Activated CD8-positive, alpha-beta memory T cell treated with anti-CD3 and anti-CD28 coated beads, Interleukin-2, amount 10 ng/mL, durations not matched to agents 7 days and 5 days (primary cell): ENCODE measurements at regions of chr9 and their contacts with region 1.

Region 1: DNA sequence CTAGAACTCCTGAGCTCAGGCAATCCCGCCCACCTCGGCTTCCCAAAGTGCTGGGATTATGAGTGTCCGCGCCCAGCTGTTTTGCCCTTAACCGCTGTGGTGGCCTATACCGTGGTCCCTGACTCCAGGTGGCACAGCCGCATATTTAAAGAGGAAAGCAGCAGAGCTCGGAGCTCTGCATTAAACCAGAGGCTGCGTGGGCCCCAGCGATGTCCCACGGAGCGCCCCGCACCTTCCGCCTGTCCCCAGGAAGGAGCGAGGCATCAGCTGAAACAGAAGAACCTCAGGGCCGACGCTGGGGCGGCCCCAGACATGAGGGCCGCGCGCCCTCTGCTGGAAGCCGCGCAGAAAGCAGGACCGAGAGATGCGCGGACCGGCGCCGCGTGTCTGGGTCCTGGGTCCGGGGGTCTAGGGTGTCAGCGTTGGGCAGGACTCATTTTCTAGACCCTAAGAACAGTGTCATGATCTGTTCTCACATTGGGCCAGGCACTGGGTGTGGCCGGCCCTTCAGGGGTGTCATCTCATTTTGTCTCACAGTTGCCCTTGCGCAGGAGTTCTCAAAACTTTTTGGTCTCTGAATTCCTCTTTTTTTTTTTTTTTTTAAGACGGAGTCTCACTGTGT is 37.7 kb downstream of the LAMC3 start:
- DNase-seq: peak; percentile 76
- ATAC-seq: peak; percentile 93
- H3K4me3 Mint-ChIP-seq: no peak overlapping the region
- H3K27ac Mint-ChIP-seq: no peak overlapping the region
- H3K4me1 Mint-ChIP-seq: peaks cover 2% of the 10 kb centered on the region
- H3K27me3 Mint-ChIP-seq: peaks cover 4% of the 10 kb centered on the region

Region 2: DNA sequence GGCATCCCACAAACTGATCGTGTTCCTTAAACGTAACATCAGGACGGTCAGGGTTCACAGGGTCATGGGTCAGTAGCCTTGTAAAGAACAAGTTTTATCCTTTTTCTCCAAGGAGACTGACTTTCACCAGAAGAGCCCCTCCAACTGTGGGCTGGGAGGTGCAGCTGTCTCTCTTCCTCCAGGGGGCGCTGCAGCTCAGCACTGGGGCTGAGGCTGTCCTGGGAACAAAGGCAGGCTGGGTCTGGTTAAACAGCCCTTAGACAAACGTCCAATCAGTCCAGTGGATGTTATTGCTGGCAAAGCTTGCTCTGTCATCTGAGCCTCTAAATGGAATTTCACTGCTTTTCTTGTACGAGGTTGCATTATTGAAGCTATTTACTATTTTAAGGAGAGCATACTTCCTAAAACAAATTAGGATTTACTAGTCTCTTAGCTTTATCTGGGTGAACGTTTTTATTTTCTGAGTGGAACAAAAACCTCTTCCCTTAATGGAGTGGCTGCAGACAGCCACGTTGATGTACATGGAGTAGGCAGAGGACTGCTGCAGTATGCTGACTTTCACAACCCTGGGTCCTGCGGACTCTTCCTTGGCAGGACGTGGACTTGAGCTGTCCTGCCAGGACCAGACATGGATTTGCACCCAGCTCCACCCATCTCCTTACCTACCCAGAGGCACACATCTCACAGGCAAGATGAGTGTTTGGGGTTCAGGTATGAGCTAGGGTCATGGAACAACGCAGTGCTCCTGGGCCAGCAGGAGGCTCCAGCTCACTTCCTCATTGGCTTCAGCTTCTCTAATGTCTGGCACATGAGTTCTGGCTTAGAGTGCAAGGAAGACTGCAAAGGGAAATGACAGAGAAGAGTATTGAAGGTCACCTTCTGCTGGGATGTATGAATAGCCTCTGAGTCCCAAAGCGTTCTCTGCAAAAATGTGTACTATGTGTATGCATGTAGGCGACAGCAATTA is 345.4 kb before region 1 on chr9:
- CTCF ChIA-PET with region 1: interaction called, 13 read pairs
- DNase-seq: peak; percentile 73
- ATAC-seq: peak; percentile 85
- H3K4me3 Mint-ChIP-seq: no peak overlapping the region
- H3K27ac Mint-ChIP-seq: peak overlapping the region; percentile 22
- H3K4me1 Mint-ChIP-seq: peaks cover 27% of the 10 kb centered on the region
- H3K27me3 Mint-ChIP-seq: no peaks in the 10 kb centered on the region

Region 3: GRCh38 chr9:130856474-130856873 is 190.2 kb before region 1 on chr9:
- CTCF ChIA-PET with region 1: no interaction called
- DNase-seq: no peak
- ATAC-seq: no peak
- H3K4me3 Mint-ChIP-seq: no peak overlapping the region
- H3K27ac Mint-ChIP-seq: no peak overlapping the region
- H3K4me1 Mint-ChIP-seq: no peaks in the 10 kb centered on the region
- H3K27me3 Mint-ChIP-seq: no peaks in the 10 kb centered on the region

Region 4: DNA sequence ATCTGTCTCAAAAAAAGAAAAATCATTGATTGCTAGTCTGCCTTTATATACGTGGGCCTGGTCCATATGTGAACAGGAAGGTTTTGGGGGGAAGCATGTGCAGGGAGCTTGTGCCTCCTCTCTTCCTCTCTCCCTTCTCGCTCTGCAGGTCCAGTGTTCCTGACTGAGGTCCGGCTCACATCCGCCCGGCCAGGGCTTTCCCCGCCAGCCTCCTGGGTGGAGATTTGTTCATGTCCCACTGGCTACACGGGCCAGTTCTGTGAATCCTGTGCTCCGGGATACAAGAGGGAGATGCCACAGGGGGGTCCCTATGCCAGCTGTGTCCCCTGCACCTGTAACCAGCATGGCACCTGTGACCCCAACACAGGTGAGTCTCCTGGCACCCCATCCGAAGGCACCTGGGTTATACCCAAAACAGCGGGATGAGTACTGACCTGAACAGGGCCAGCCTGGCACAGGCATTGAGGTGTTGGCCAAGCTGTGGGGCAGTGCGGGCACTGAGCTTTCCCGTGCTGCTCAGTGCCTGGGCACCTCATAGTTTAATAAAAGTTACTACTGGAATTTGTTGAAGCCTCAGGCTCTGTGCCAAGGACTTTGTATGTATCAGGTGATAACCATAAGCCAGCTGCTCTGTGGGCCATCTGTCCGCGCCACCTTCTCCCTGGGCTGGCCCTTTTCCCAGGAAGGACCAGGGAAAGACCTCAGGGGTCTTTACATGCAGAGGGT is 10.3 kb after region 1 on chr9:
- CTCF ChIA-PET with region 1: interaction called, 35 read pairs
- DNase-seq: no peak
- ATAC-seq: no peak
- H3K4me3 Mint-ChIP-seq: no peak overlapping the region
- H3K27ac Mint-ChIP-seq: no peak overlapping the region
- H3K4me1 Mint-ChIP-seq: no peaks in the 10 kb centered on the region
- H3K27me3 Mint-ChIP-seq: peaks cover 2% of the 10 kb centered on the region